CD8-positive, alpha-beta T cell (primary cell): ENCODE measurements at regions of chr1 and their contacts with region 1.

Region 1: GRCh38 chr1:100037927-100038659 is 68.3 kb downstream of the SLC35A3 start:
- DNase-seq: peak; percentile 77 to 95 (median 87)
- ATAC-seq: peak; percentile 78
- H3K4me3 ChIP-seq: peak overlapping the region; percentile 85 to 94
- H3K4me3 Mint-ChIP-seq: peak overlapping the region; percentile 97
- H3K27ac ChIP-seq: peak overlapping the region; percentile 94 to 99
- H3K27ac Mint-ChIP-seq: peak overlapping the region; percentile 98
- H3K4me1 ChIP-seq: peaks cover 43% of the 10 kb centered on the region
- H3K4me1 Mint-ChIP-seq: peaks cover 52% of the 10 kb centered on the region
- H3K27me3 ChIP-seq: no peaks in the 10 kb centered on the region
- H3K27me3 Mint-ChIP-seq: no peaks in the 10 kb centered on the region
- CTCF ChIP-seq: no peak

Region 2: DNA sequence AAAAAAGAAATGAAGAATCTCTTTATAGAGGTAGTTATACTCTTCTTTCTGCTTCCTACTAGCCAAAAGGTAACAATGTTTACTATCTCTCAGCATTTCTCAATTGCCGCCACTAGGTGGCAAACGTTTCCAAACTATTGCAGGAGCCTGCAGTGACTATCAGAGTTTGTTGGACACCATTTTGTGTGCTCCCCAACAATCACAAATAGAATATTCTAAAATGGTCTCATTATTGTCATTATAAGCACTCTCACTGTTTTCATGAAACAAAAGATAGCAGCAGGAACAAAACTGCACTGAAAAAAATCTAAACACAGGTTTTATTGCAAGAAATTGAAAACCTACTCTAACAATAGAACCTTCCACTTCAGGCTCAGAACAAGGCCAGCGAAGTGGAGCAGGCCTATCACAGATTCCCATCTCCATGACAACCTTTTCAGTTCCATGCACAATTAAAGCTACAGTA is 857.7 kb before region 1 on chr1:
- CTCF ChIA-PET with region 1: no interaction called
- POLR2A ChIA-PET with region 1: no interaction called
- intact Hi-C with region 1: loop called (anchors 5 to 10 kb)
- DNase-seq: peak; percentile 13 to 71 (median 53)
- ATAC-seq: peak; percentile 61
- H3K4me3 ChIP-seq: no peak overlapping the region
- H3K4me3 Mint-ChIP-seq: no peak overlapping the region
- H3K27ac ChIP-seq: no peak overlapping the region
- H3K27ac Mint-ChIP-seq: no peak overlapping the region
- H3K4me1 ChIP-seq: no peaks in the 10 kb centered on the region
- H3K4me1 Mint-ChIP-seq: no peaks in the 10 kb centered on the region
- H3K27me3 ChIP-seq: no peaks in the 10 kb centered on the region
- H3K27me3 Mint-ChIP-seq: peaks cover 4% of the 10 kb centered on the region
- CTCF ChIP-seq: peak; percentile 97

Region 3: GRCh38 chr1:99849744-99850458 is 188.2 kb before region 1 on chr1 and contains the start of gene AGL:
- CTCF ChIA-PET with region 1: no interaction called
- POLR2A ChIA-PET with region 1: no interaction called
- intact Hi-C with region 1: loop called (anchors 2 to 5 kb)
- DNase-seq: peak; percentile 75 to 92 (median 86)
- ATAC-seq: peak; percentile 95
- H3K4me3 ChIP-seq: peak within 1 kb of the TSS; percentile 80 to 96
- H3K4me3 Mint-ChIP-seq: peak within 1 kb of the TSS; percentile 95
- H3K27ac ChIP-seq: peak within 1 kb of the TSS; percentile 70 to 74
- H3K27ac Mint-ChIP-seq: peak within 1 kb of the TSS; percentile 94
- H3K4me1 ChIP-seq: peaks cover 14% of the 10 kb centered on the region
- H3K4me1 Mint-ChIP-seq: peaks cover 42% of the 10 kb centered on the region
- H3K27me3 ChIP-seq: no peaks in the 10 kb centered on the region
- H3K27me3 Mint-ChIP-seq: no peaks in the 10 kb centered on the region
- CTCF ChIP-seq: no peak
- total RNA-seq, gene AGL: 7.6 to 8.4 TPM

Region 4: GRCh38 chr1:99969729-99970621 is 68.1 kb before region 1 on chr1 and contains the start of gene SLC35A3:
- CTCF ChIA-PET with region 1: no interaction called
- POLR2A ChIA-PET with region 1: interaction called, 14 read pairs
- intact Hi-C with region 1: loop called (anchors 1 to 2 kb)
- DNase-seq: peak; percentile 56 to 88 (median 80)
- ATAC-seq: peak; percentile 82
- H3K4me3 ChIP-seq: peak within 1 kb of the TSS; percentile 76 to 89
- H3K4me3 Mint-ChIP-seq: peak within 1 kb of the TSS; percentile 99
- H3K27ac ChIP-seq: peak within 1 kb of the TSS; percentile 72 to 77
- H3K27ac Mint-ChIP-seq: peak within 1 kb of the TSS; percentile 95
- H3K4me1 ChIP-seq: peaks cover 14% of the 10 kb centered on the region
- H3K4me1 Mint-ChIP-seq: peaks cover 36% of the 10 kb centered on the region
- H3K27me3 ChIP-seq: no peaks in the 10 kb centered on the region
- H3K27me3 Mint-ChIP-seq: no peaks in the 10 kb centered on the region
- CTCF ChIP-seq: no peak
- total RNA-seq, gene SLC35A3: 30.2 to 35.4 TPM

Region 5: GRCh38 chr1:99980928-99981327 is 57.2 kb before region 1 on chr1:
- CTCF ChIA-PET with region 1: no interaction called
- POLR2A ChIA-PET with region 1: no interaction called
- intact Hi-C with region 1: no loop called
- DNase-seq: no peak
- ATAC-seq: no peak
- H3K4me3 ChIP-seq: no peak overlapping the region
- H3K4me3 Mint-ChIP-seq: no peak overlapping the region
- H3K27ac ChIP-seq: no peak overlapping the region
- H3K27ac Mint-ChIP-seq: no peak overlapping the region
- H3K4me1 ChIP-seq: no peaks in the 10 kb centered on the region
- H3K4me1 Mint-ChIP-seq: peaks cover 34% of the 10 kb centered on the region
- H3K27me3 ChIP-seq: no peaks in the 10 kb centered on the region
- H3K27me3 Mint-ChIP-seq: no peaks in the 10 kb centered on the region
- CTCF ChIP-seq: no peak

Region 6: GRCh38 chr1:100132566-100133477 is 94.7 kb after region 1 on chr1 and contains the starts of genes SASS6 and TRMT13:
- CTCF ChIA-PET with region 1: no interaction called
- POLR2A ChIA-PET with region 1: interaction called, 7 read pairs
- intact Hi-C with region 1: loop called (anchors 1 kb)
- DNase-seq: peak; percentile 86 to 97 (median 93)
- ATAC-seq: peak; percentile 97
- H3K4me3 ChIP-seq: peak within 1 kb of the TSS; percentile 83
- H3K4me3 Mint-ChIP-seq: peak within 1 kb of the TSS; percentile 99
- H3K27ac ChIP-seq: peak within 1 kb of the TSS; percentile 71 to 72
- H3K27ac Mint-ChIP-seq: peak within 1 kb of the TSS; percentile 98
- H3K4me1 ChIP-seq: peaks cover 14% of the 10 kb centered on the region
- H3K4me1 Mint-ChIP-seq: peaks cover 44% of the 10 kb centered on the region
- H3K27me3 ChIP-seq: no peaks in the 10 kb centered on the region
- H3K27me3 Mint-ChIP-seq: no peaks in the 10 kb centered on the region
- CTCF ChIP-seq: no peak
- total RNA-seq, gene SASS6: 1.2 TPM
- total RNA-seq, gene TRMT13: 6.5 to 7.2 TPM

Region 7: GRCh38 chr1:100265931-100266740 is 228.0 kb after region 1 on chr1 and contains the start of gene RTCA:
- CTCF ChIA-PET with region 1: no interaction called
- POLR2A ChIA-PET with region 1: interaction called, 3 read pairs
- intact Hi-C with region 1: loop called in 1 of 2 experiments (anchors 1 kb)
- DNase-seq: peak; percentile 85 to 98 (median 97)
- ATAC-seq: peak; percentile 94
- H3K4me3 ChIP-seq: peak within 1 kb of the TSS; percentile 80 to 94
- H3K4me3 Mint-ChIP-seq: peak within 1 kb of the TSS; percentile 100
- H3K27ac ChIP-seq: peak within 1 kb of the TSS; percentile 68 to 78
- H3K27ac Mint-ChIP-seq: peak within 1 kb of the TSS; percentile 98
- H3K4me1 ChIP-seq: peaks cover 29% of the 10 kb centered on the region
- H3K4me1 Mint-ChIP-seq: peaks cover 47% of the 10 kb centered on the region
- H3K27me3 ChIP-seq: no peaks in the 10 kb centered on the region
- H3K27me3 Mint-ChIP-seq: no peaks in the 10 kb centered on the region
- CTCF ChIP-seq: no peak
- total RNA-seq, gene RTCA: 36.2 to 37.7 TPM

Region 8: GRCh38 chr1:100895540-100896483 is 857.7 kb after region 1 on chr1 and contains the start of gene SLC30A7:
- CTCF ChIA-PET with region 1: no interaction called
- POLR2A ChIA-PET with region 1: no interaction called
- intact Hi-C with region 1: loop called (anchors 2 to 10 kb)
- DNase-seq: peak; percentile 91 to 98 (median 96)
- ATAC-seq: peak; percentile 72
- H3K4me3 ChIP-seq: peak within 1 kb of the TSS; percentile 92 to 98
- H3K4me3 Mint-ChIP-seq: peak within 1 kb of the TSS; percentile 100
- H3K27ac ChIP-seq: peak within 1 kb of the TSS; percentile 85 to 99
- H3K27ac Mint-ChIP-seq: peak within 1 kb of the TSS; percentile 100
- H3K4me1 ChIP-seq: peaks cover 20% of the 10 kb centered on the region
- H3K4me1 Mint-ChIP-seq: peaks cover 49% of the 10 kb centered on the region
- H3K27me3 ChIP-seq: no peaks in the 10 kb centered on the region
- H3K27me3 Mint-ChIP-seq: no peaks in the 10 kb centered on the region
- CTCF ChIP-seq: no peak
- total RNA-seq, gene SLC30A7: 18.8 to 20.2 TPM